Vagina (tissue), 2 donors: ENCODE measurements at regions of chr21 and their contacts with region 1.

Region 1: DNA sequence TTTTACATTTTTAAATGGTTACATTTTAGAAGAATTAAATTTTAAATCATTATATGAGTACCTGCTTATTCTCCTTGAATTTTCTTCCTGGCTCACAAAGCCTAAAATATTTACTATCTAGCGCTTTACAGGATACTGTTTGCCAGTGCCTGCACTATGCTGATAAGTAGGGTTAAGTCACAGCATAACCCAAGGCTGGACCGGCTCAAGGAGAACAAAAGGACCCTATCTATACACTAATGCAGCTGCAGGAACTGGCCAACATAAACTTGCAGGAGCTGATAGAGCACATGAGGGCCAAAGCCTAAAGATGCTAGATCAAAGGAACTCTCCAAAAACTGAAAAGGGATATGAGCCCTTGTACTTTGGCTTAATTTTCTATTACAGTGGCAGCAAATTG is 1086.9 kb upstream of the TMPRSS15 start:
- DNase-seq: no peak
- H3K4me3 ChIP-seq: no peak overlapping the region
- H3K27ac ChIP-seq: no peak overlapping the region
- H3K4me1 ChIP-seq: no peaks in the 10 kb centered on the region
- H3K27me3 ChIP-seq: no peaks in the 10 kb centered on the region
- CTCF ChIP-seq: no peak
- POLR2A ChIP-seq: no peak

Region 2: GRCh38 chr21:19244502-19245187 is 245.8 kb before region 1 on chr21:
- intact Hi-C with region 1: loop called (anchors 5 kb)
- DNase-seq: no peak
- H3K4me3 ChIP-seq: no peak overlapping the region
- H3K27ac ChIP-seq: no peak overlapping the region
- H3K4me1 ChIP-seq: no peaks in the 10 kb centered on the region
- H3K27me3 ChIP-seq: no peaks in the 10 kb centered on the region
- CTCF ChIP-seq: no peak
- POLR2A ChIP-seq: no peak

Region 3: DNA sequence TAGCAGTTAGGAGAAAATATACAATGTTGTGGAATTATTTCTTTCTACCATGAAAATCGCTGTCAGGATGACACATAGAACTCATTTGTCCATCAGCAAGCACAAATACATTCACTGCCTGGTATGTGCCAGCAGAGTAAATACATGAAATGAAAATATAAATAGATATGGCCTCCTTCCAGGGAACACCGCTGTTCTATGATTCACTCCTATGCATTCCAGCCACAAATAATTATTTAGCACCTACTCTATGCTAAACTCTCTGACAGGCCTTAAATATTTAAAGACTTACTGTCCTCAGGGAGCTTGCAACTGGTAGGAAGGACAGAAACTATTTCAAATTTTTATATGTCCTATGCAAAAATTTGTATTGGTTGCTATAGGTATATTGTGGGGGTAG is 532.7 kb after region 1 on chr21:
- intact Hi-C with region 1: no loop called
- DNase-seq: no peak
- H3K4me3 ChIP-seq: no peak overlapping the region
- H3K27ac ChIP-seq: no peak overlapping the region
- H3K4me1 ChIP-seq: no peaks in the 10 kb centered on the region
- H3K27me3 ChIP-seq: no peaks in the 10 kb centered on the region
- CTCF ChIP-seq: no peak
- POLR2A ChIP-seq: no peak